ENCODE measurements at regions of chr10 and their contacts with region 1.

Region 1: GRCh38 chr10:132654702-132655661 is 117.4 kb downstream of the INPP5A start:
- DNase-seq: peak; percentile 63 to 69
- H3K4me3 ChIP-seq: no peak overlapping the region
- H3K27ac ChIP-seq: no peak overlapping the region
- H3K4me1 ChIP-seq: peaks cover 9 to 12% of the 10 kb centered on the region in 2 donors
- H3K27me3 ChIP-seq: no peaks in the 10 kb centered on the region
- CTCF ChIP-seq: peak; percentile 66 to 95 (median 93)
- POLR2A ChIP-seq: no peak

Region 2: GRCh38 chr10:132311344-132311791 is 343.6 kb before region 1 on chr10:
- intact Hi-C with region 1: no loop called
- DNase-seq: no peak
- H3K4me3 ChIP-seq: no peak overlapping the region
- H3K27ac ChIP-seq: no peak overlapping the region
- H3K4me1 ChIP-seq: peaks cover 11 to 15% of the 10 kb centered on the region in 2 donors
- H3K27me3 ChIP-seq: no peaks in the 10 kb centered on the region
- CTCF ChIP-seq: no peak
- POLR2A ChIP-seq: no peak

Region 3: DNA sequence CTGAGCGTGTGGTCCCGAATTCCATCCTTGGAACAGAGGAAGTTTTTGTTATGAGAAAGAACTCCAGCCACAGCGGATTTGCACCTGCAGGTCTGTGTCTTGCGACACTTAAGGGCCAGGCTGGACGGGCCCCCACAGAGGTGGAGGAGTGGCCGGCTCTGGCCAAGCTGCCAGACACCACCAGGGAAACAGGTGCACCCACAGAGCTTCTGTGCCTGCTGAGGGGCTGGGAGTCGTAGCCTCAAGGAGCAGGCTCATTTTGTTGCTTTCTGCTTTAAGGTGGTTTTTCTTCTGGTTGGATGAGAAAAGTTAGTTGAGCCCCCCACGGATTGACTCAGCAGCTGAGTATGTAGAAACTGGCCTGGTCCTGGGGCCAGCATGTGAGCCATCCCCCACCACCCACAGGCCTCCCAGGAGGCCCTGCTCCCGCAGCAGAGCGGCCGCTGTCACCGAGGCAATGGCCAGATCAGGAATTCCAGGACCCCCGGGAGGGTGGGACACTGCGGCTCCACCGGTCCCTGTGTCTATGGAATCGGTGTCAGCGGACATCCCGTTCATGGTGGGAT is 89.0 kb after region 1 on chr10:
- intact Hi-C with region 1: loop called (anchors 5 kb)
- DNase-seq: no peak
- H3K4me3 ChIP-seq: no peak overlapping the region
- H3K27ac ChIP-seq: no peak overlapping the region
- H3K4me1 ChIP-seq: peaks cover 39 to 40% of the 10 kb centered on the region in 2 donors
- H3K27me3 ChIP-seq: no peaks in the 10 kb centered on the region
- CTCF ChIP-seq: no peak
- POLR2A ChIP-seq: no peak

Region 4: GRCh38 chr10:132788180-132788830 is 133.3 kb after region 1 on chr10:
- intact Hi-C with region 1: loop called (anchors 5 kb)
- DNase-seq: peak; percentile 19 to 29
- H3K4me3 ChIP-seq: no peak overlapping the region
- H3K27ac ChIP-seq: no peak overlapping the region
- H3K4me1 ChIP-seq: peaks cover 9 to 39% of the 10 kb centered on the region in 2 donors
- H3K27me3 ChIP-seq: peaks cover 18% of the 10 kb centered on the region
- CTCF ChIP-seq: peak in 3 of 6 experiments; percentile 10 to 30 (median 27)
- POLR2A ChIP-seq: no peak

Region 5: DNA sequence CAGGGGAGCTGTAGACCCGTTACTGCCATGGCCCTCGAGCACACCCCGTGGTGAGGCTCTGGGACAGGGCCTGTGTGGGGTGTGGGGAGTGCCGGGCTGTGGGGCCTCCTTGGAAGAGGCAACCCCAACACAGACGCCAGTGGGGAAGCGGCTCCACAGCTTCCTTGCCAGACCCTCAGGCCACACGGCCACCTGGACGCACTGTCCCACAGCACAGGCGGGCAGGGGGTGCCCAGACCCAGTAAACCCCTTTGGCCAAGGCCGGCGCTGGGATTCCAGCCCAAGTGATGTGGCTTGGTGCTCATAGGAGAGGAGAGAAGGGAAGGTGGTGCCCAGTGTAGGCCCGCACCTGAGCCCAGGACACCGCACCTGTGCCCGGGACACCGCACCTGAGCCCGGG is 143.9 kb after region 1 on chr10:
- intact Hi-C with region 1: no loop called
- DNase-seq: no peak
- H3K4me3 ChIP-seq: no peak overlapping the region
- H3K27ac ChIP-seq: no peak overlapping the region
- H3K4me1 ChIP-seq: no peaks in the 10 kb centered on the region
- H3K27me3 ChIP-seq: no peaks in the 10 kb centered on the region
- CTCF ChIP-seq: no peak
- POLR2A ChIP-seq: no peak

Region 6: GRCh38 chr10:132836832-132837540 is 182.0 kb after region 1 on chr10:
- intact Hi-C with region 1: loop called (anchors 5 kb)
- DNase-seq: peak; percentile 55 to 60
- H3K4me3 ChIP-seq: peak overlapping the region in 1 of 3 donors; percentile 16
- H3K27ac ChIP-seq: peak overlapping the region; percentile 74 to 84 (median 81)
- H3K4me1 ChIP-seq: peaks cover 8 to 10% of the 10 kb centered on the region in 2 donors
- H3K27me3 ChIP-seq: no peaks in the 10 kb centered on the region
- CTCF ChIP-seq: peak; percentile 94 to 98 (median 96)
- POLR2A ChIP-seq: no peak

Region 7: DNA sequence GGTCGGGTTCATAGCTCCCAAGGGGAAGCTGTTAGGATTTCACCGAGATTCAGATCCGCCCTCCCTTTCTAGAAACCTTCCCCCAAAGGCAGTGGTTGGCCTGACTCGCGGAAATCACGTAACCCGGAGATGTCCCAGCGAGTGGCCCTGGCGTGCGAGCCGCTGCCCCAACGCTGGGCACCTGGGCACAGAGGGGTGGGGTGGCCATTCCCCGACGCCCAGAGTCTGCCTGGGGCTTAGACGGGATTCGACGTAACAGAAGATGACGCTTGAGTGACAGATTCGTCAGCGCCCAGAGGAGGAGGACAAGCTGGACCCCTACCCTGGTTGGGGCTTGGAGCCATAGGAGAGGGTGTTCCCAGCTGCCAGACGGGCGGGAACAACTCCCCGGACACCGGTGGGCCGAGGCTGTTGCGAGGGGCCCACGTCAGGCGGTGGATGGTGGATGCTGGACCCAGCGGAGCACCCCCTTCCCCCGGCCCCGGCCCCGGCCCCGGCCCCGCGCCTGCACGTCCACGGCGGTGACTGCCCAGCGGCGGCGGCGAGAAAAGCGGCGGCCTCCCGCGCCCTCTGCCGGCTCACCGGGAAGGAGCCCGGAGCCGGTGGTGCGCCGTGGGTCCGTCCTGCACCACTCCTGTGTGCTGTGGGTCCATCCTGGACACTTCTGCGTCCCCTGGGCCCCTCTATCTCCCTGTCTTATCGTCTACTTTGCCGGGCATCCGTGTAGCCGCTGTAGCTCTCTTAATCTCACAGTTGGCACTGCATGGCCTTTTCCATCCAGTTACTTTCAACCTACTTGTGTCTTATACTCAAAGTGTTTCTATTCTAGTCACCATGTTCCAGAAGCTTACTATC is 469.6 kb after region 1 on chr10:
- intact Hi-C with region 1: loop called (anchors 10 kb)
- DNase-seq: peak; percentile 34 to 46
- H3K4me3 ChIP-seq: no peak overlapping the region
- H3K27ac ChIP-seq: no peak overlapping the region
- H3K4me1 ChIP-seq: no peaks in the 10 kb centered on the region
- H3K27me3 ChIP-seq: no peaks in the 10 kb centered on the region
- CTCF ChIP-seq: peak in 4 of 6 experiments; percentile 35 to 72 (median 50)
- POLR2A ChIP-seq: no peak

Measured in thyroid gland (tissue), 4 donors.